GM23248 (cell line): ENCODE measurements at regions of chr16 and their contacts with region 1.

Region 1: DNA sequence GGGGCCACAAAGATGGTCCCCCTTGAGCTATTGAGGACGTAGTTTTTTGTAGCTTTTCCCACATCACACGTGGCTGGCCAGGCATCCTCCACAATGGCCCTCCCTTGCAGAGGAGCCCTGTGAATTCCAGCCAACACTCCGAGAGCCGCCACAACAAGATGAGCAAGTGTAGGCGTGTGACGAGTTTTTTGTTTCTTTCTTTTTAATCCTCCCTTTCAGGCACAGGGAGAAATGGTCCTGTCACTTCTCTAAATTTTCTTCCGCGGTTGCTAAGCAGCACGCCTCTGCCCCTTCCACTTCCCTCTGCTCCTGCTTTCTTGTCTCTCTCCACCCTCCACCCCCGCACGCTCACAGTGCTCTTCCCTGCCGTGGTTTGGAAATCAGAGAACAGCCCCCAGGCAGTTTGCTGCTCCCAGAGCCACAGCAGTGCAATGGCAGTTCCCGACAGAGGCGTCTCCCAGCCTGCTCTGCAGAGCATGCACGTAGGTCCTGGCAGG is 68.0 kb upstream of the MRTFB start:
- DNase-seq: peak; percentile 88
- H3K4me3 ChIP-seq: peak overlapping the region; percentile 64
- H3K27ac ChIP-seq: peak overlapping the region; percentile 9; the same call in 1 of the 2 replicates
- H3K4me1 ChIP-seq: peaks cover 7% of the 10 kb centered on the region
- H3K27me3 ChIP-seq: no peaks in the 10 kb centered on the region

Region 2: GRCh38 chr16:13873835-13874438 is 129.2 kb before region 1 on chr16:
- in situ Hi-C with region 1: no loop called
- DNase-seq: peak; percentile 21
- H3K4me3 ChIP-seq: no peak overlapping the region
- H3K27ac ChIP-seq: no peak overlapping the region
- H3K4me1 ChIP-seq: no peaks in the 10 kb centered on the region
- H3K27me3 ChIP-seq: no peaks in the 10 kb centered on the region; the same call in 1 of the 2 replicates

Region 3: DNA sequence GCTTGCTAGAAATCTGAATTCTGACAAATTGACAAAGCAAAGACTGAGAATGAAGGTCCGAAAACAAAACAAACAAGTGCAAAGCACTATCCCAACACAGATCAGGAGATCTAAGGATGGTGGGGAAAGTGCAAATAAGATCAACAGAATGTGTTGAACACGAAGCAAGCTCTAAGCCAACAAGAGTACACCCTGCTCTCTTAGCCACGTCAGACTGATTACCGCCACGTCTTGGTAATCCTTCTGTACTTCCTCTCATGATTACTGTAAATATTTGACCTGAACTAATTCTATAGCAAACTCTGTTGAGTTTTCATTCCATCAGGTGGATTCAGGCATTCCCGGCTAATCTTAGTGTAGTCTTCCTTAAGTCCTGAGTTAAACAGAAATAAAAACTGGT is 117.4 kb before region 1 on chr16:
- in situ Hi-C with region 1: no loop called
- DNase-seq: no peak
- H3K4me3 ChIP-seq: no peak overlapping the region
- H3K27ac ChIP-seq: no peak overlapping the region
- H3K4me1 ChIP-seq: no peaks in the 10 kb centered on the region
- H3K27me3 ChIP-seq: no peaks in the 10 kb centered on the region

Region 4: DNA sequence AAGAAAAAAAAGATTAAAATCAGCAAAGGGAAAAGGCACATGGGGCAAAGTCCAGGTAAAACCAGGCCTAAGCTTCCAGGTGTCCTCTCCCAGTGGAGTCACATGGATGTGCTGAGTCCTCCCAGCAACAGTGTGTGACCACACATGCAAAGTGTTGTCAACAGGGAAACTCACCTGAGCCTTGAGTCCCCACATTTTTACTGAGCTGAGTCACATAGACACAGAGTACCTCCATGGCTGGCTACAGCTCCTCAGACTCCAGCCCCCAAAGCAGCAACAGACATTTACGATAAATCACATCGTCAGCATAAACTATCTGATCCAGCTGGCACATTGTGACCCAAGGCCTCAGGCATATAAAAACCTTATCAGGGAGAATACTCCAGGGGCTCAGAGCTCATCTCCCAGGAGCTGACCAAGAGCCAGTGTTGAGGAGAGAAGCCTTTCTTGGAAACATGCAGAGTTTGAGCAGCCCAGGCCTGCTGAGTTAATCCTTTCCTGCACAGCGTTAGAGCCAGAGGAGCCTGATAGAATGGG is 62.7 kb before region 1 on chr16:
- in situ Hi-C with region 1: loop called (anchors 10 kb)
- DNase-seq: no peak
- H3K4me3 ChIP-seq: no peak overlapping the region
- H3K27ac ChIP-seq: no peak overlapping the region
- H3K4me1 ChIP-seq: peaks cover 10% of the 10 kb centered on the region
- H3K27me3 ChIP-seq: no peaks in the 10 kb centered on the region